ENCODE measurements at regions of chrX and their contacts with region 1.

Region 1: DNA sequence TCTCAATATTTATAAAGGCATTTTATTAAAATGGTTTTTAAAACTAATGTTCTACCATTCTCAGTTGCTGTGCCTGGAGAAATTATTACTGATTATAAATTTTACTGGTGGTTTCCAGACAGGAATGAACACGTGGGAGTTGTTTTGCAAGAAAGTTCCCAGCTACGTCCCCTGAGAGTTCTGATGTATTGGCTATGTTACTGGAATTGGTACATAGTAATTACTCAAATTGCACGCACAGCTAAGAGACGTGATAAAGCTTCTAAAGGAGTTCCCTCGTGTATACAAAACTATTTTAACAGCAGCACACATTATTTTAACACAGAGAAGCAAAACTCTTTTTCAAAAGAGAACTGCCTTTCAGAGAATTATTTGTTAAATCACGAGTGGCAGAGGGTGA is 292.2 kb downstream of the NLGN4X start:
- DNase-seq: peak in 1 of 2 donors; percentile 11
- ATAC-seq: peak in 1 of 4 donors; percentile 35
- H3K4me3 ChIP-seq: no peak overlapping the region
- H3K27ac ChIP-seq: no peak overlapping the region
- H3K4me1 ChIP-seq: no peaks in the 10 kb centered on the region
- H3K27me3 ChIP-seq: no peaks in the 10 kb centered on the region
- CTCF ChIP-seq: no peak

Region 2: DNA sequence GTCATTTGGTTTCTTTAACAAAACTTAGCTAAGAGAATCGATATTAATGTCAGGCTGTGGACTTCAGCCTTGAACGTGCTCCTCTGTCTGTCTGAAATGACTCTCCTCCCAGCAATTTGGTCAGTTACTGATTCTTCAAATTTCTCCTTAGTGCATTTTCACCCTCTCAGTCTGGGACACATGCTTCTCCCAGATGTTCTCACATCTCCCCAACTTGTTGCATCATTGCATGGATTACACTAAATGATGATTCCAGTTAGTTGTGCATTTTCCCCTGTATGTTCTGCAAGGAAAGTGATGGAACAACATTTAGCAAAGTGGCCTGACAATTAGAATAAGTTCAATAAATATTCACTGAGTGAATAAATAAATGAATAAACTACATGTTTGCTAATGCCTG is 197.8 kb after region 1 on chrX:
- intact Hi-C with region 1: no loop called
- DNase-seq: no peak
- ATAC-seq: no peak
- H3K4me3 ChIP-seq: no peak overlapping the region
- H3K27ac ChIP-seq: no peak overlapping the region
- H3K4me1 ChIP-seq: no peaks in the 10 kb centered on the region
- H3K27me3 ChIP-seq: no peaks in the 10 kb centered on the region
- CTCF ChIP-seq: no peak

Region 3: DNA sequence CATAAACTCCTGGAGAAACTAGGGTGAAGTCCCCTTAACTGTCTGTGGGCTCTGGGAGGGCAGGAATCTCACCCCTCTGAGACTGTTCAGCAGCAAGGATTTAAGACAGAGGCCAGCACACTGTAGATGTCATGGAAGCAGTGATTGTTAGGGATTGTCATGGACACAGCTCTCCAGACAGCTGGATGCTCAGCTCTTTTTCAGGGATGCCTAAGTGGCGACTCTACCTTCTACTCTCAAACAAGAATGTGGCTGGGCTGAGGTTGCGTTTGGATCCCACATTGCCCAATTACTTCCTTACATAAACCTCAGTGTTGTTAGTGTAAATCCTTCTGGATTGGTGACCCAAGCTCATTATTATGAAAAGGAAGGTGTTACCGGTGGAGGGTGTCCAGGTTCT is 890.4 kb after region 1 on chrX:
- intact Hi-C with region 1: no loop called
- DNase-seq: no peak
- ATAC-seq: no peak
- H3K4me3 ChIP-seq: no peak overlapping the region
- H3K27ac ChIP-seq: no peak overlapping the region
- H3K4me1 ChIP-seq: no peaks in the 10 kb centered on the region
- H3K27me3 ChIP-seq: no peaks in the 10 kb centered on the region
- CTCF ChIP-seq: no peak

Region 4: GRCh38 chrX:7654316-7654715 is 1717.9 kb after region 1 on chrX:
- intact Hi-C with region 1: loop called in 1 of 2 experiments (anchors 5 kb)
- DNase-seq: no peak
- ATAC-seq: no peak
- H3K4me3 ChIP-seq: no peak overlapping the region
- H3K27ac ChIP-seq: no peak overlapping the region
- H3K4me1 ChIP-seq: no peaks in the 10 kb centered on the region
- H3K27me3 ChIP-seq: no peaks in the 10 kb centered on the region
- CTCF ChIP-seq: no peak